Posterior vena cava (tissue), 2 donors: ENCODE measurements at regions of chr1 and their contacts with region 1.

Region 1: GRCh38 chr1:167249702-167250101 is 29.0 kb downstream of the POU2F1 start:
- DNase-seq: no peak

Region 2: GRCh38 chr1:167273027-167273800 is 23.5 kb after region 1 on chr1:
- intact Hi-C with region 1: no loop called
- DNase-seq: no peak

Region 3: DNA sequence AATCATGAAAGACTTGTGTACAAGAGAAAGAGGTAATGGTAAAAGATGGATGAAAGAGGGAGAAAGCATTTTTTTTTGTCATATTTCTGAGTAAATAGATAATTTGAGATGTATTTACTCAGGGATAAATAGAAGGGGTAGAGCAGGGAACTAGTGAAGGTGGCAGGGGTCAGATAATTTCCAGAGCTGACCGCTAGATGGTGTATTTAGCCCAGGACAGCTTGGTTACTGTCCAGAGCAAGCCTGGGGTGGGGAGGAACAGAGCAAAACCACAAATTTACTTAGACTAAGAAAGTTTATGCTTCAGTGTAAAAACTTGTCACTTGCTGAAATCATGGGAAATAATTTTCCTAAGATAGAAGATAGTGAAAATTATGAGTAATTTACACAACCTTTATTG is 1202.6 kb after region 1 on chr1:
- intact Hi-C with region 1: loop called in 1 of 2 experiments (anchors 10 kb)
- DNase-seq: no peak